ENCODE measurements at regions of chr15 and their contacts with region 1.

Region 1: GRCh38 chr15:84911879-84912660 is 27.6 kb downstream of the SLC28A1 start:
- DNase-seq: no peak
- H3K4me3 Mint-ChIP-seq: no peak overlapping the region
- H3K27ac Mint-ChIP-seq: no peak overlapping the region
- H3K4me1 Mint-ChIP-seq: peaks cover 6% of the 10 kb centered on the region
- H3K27me3 Mint-ChIP-seq: peaks cover 2% of the 10 kb centered on the region

Region 2: DNA sequence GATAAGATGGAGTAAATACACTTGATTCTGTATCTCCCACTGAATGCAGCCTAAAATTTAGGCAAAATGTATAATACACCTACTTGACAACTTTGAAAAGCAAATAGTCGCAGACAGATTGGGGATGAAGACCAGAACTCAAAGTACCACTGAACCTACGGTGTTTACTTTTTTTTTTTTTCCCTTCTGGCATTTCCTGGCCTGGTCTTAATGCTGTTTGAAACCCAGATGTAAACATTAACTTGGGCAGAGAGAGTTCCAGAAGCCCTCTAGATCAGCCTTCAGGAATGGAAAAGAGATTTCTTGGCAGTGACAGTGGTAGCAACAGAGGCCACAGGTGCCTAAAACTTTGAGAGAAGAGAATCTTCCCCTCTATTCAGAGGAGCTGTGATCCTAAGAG is 67.1 kb before region 1 on chr15:
- CTCF ChIA-PET with region 1: no interaction called
- intact Hi-C with region 1: loop called (anchors 2 kb)
- DNase-seq: no peak
- H3K4me3 Mint-ChIP-seq: no peak overlapping the region
- H3K27ac Mint-ChIP-seq: no peak overlapping the region
- H3K4me1 Mint-ChIP-seq: no peaks in the 10 kb centered on the region
- H3K27me3 Mint-ChIP-seq: no peaks in the 10 kb centered on the region

Region 3: GRCh38 chr15:84863565-84864443 is 48.3 kb before region 1 on chr15:
- CTCF ChIA-PET with region 1: no interaction called
- intact Hi-C with region 1: loop called (anchors 5 kb)
- DNase-seq: no peak
- H3K4me3 Mint-ChIP-seq: no peak overlapping the region
- H3K27ac Mint-ChIP-seq: no peak overlapping the region
- H3K4me1 Mint-ChIP-seq: no peaks in the 10 kb centered on the region
- H3K27me3 Mint-ChIP-seq: no peaks in the 10 kb centered on the region

Region 4: GRCh38 chr15:84883916-84884768 is 27.9 kb before region 1 on chr15 and contains the start of gene SLC28A1:
- CTCF ChIA-PET with region 1: no interaction called
- intact Hi-C with region 1: no loop called
- DNase-seq: no peak
- H3K4me3 Mint-ChIP-seq: no peak within 1 kb of the TSS
- H3K27ac Mint-ChIP-seq: no peak within 1 kb of the TSS
- H3K4me1 Mint-ChIP-seq: no peaks in the 10 kb centered on the region
- H3K27me3 Mint-ChIP-seq: no peaks in the 10 kb centered on the region
- total RNA-seq, gene SLC28A1: not detected